GM23248 (cell line): ENCODE measurements at regions of chr7 and their contacts with region 1.

Region 1: GRCh38 chr7:25894902-25895791 is 256.9 kb upstream of the NFE2L3 start:
- DNase-seq: peak; percentile 57
- H3K4me3 ChIP-seq: peak overlapping the region; percentile 61
- H3K27ac ChIP-seq: no peak overlapping the region
- H3K4me1 ChIP-seq: no peaks in the 10 kb centered on the region
- H3K27me3 ChIP-seq: 0 out of 2 replicates have a peak, but pooled peaks cover 3% of the 10 kb centered on the region

Region 2: DNA sequence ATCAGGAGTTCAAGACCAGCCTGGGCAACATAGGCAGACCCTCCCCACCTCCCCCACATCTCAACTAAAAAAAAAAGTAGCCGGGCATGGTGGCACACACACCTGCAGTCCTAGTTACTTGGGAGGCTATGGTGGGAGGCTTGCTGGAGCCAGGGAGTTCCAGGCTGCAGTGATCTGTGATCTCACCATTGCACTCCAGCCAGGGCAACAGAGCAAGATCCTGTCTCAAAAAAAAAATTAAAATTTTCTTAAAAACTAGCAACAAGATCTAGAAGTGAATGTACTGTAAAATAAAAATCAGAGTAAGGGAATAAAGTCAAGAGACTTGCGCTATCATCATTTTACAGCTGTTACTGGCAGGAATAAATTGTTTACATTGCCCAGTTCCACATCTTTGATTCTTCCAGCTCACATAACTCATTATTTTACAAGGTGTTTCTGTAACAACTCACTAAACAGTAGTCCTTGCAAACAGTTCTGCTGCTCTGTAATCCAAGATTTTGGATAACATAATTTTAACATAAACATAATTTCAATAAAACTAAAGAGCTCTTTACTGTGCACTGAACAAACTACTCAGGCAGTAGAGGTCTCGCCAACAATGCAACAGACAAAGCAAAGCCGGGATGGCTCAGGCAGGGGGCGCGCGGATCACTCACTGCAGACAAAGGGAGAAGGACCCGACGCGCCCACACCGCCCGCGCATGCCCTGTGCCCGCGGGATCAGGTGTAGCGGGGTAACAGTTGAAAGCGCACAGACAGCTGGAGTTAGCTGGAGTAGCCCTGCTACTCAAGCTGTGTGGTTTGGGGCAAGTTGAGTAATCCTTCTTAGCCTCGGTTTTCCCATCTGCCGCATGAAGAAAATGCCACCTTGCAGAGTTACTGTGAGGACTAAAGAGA is 183.5 kb after region 1 on chr7:
- in situ Hi-C with region 1: loop called (anchors 10 kb)
- DNase-seq: peak; percentile 29
- H3K4me3 ChIP-seq: no peak overlapping the region
- H3K27ac ChIP-seq: no peak overlapping the region
- H3K4me1 ChIP-seq: no peaks in the 10 kb centered on the region
- H3K27me3 ChIP-seq: peaks cover 39% of the 10 kb centered on the region

Region 3: DNA sequence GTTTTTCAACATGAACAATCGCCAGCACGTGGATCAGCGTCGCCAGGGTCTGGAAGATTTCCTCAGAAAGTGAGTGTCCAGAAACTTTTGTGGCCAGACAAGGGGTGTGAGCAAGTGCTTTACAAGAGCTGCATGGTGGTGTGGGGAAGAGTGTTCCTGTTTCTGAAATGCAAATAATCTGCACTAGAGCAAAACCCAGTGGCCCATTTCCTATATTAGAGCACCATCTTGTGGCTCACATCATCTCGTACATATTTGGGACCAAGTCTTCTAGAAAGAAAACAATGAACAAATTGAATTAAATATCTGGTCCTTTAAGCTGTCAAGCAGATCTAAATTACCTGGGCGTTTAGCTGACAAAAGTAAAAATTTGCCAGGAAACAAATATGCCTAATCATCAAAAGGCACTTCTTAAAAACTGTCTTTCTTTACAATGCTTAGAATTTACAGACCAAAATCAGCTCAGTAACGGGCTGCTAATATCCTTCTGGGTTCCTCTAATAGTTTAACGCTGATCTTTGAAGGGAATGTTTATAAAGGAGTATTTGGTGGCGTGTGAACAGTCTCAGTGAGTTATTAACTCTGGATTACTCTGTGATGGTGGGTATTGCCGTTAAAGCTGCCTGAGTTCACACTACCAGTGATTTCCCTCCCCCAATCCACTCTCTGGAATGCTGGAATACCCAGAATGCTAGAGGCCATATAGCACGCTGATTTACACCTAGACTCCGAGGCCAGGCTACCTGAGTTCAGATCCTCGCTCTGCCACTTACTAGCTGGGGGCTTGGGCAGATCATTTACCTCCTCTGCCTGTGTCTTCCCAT is 470.1 kb after region 1 on chr7:
- in situ Hi-C with region 1: loop called (anchors 5 kb)
- DNase-seq: peak; percentile 79
- H3K4me3 ChIP-seq: no peak overlapping the region
- H3K27ac ChIP-seq: no peak overlapping the region
- H3K4me1 ChIP-seq: no peaks in the 10 kb centered on the region
- H3K27me3 ChIP-seq: peaks cover 3% of the 10 kb centered on the region; the same call in 1 of the 2 replicates

Region 4: DNA sequence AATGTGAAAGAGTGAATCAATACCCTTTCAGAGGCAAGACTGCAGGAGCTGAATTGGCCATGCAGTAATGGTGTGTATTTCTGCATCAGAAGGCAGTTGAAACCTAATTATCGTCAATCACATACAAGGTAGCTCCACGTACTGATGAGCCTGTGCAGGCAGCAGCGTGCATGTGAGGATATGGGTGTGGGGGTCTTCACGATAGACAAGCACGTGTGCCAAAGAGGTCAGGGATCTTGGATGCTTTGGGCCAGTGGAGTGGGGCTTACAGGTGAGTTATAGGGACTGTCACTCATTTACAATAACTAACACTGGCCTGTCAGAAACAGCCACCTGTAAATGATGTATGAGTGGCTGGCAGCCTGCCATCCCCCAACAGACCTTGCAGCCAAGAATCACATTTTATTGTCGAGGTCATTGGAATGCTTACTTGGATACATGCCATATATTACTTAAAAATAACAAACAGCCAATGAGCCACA is 758.3 kb after region 1 on chr7:
- in situ Hi-C with region 1: loop called (anchors 10 kb)
- DNase-seq: no peak
- H3K4me3 ChIP-seq: no peak overlapping the region
- H3K27ac ChIP-seq: no peak overlapping the region
- H3K4me1 ChIP-seq: peaks cover 4% of the 10 kb centered on the region
- H3K27me3 ChIP-seq: no peaks in the 10 kb centered on the region